ENCODE measurements at regions of chr3 and their contacts with region 1.

Region 1: DNA sequence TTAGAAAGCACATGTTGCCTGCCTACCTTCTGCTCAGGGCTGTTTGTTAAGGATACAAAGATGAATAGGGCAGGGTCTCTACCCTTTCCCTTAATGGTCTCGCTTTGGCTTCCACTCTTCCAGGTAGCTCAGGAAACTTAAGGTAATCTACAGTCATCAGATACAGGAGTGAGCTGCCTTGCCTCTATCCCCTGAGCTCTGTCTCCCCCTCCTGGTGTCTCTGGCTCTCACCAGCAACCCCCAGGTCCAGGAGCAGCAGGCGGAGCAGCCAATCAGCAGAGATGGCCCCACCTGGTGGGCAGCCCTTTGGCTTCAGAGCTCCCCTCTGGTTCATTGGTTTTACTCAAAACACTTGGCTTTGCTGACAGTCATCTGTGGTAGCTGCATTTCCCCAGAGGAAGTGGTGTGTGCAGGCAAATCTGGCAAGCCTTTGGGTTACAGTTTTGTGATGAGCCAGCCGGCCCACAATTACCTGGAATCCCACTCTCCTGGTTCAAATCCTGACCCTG is 8.5 kb upstream of the CX3CR1 start:
- DNase-seq: peak; percentile 64 to 92 (median 78)
- ATAC-seq: peak; percentile 96
- H3K4me3 ChIP-seq: no peak overlapping the region
- H3K4me3 Mint-ChIP-seq: no peak overlapping the region
- H3K27ac ChIP-seq: peak overlapping the region in 1 of 2 experiments; percentile 41
- H3K27ac Mint-ChIP-seq: peak overlapping the region; percentile 20
- H3K4me1 ChIP-seq: peaks cover 6% of the 10 kb centered on the region
- H3K4me1 Mint-ChIP-seq: peaks cover 15% of the 10 kb centered on the region
- H3K27me3 ChIP-seq: no peaks in the 10 kb centered on the region
- H3K27me3 Mint-ChIP-seq: no peaks in the 10 kb centered on the region
- CTCF ChIP-seq: peak; percentile 82

Region 2: GRCh38 chr3:38496131-38496910 is 792.0 kb before region 1 on chr3 and contains the start of gene EXOG:
- CTCF ChIA-PET with region 1: no interaction called
- POLR2A ChIA-PET with region 1: no interaction called
- intact Hi-C with region 1: loop called in 1 of 2 experiments (anchors 5 kb)
- DNase-seq: peak; percentile 93 to 97 (median 95)
- ATAC-seq: peak; percentile 95
- H3K4me3 ChIP-seq: peak within 1 kb of the TSS; percentile 88 to 96
- H3K4me3 Mint-ChIP-seq: peak within 1 kb of the TSS; percentile 97
- H3K27ac ChIP-seq: peak within 1 kb of the TSS; percentile 66 to 71
- H3K27ac Mint-ChIP-seq: peak within 1 kb of the TSS; percentile 91
- H3K4me1 ChIP-seq: peaks cover 14% of the 10 kb centered on the region
- H3K4me1 Mint-ChIP-seq: peaks cover 32% of the 10 kb centered on the region
- H3K27me3 ChIP-seq: no peaks in the 10 kb centered on the region
- H3K27me3 Mint-ChIP-seq: no peaks in the 10 kb centered on the region
- CTCF ChIP-seq: peak; percentile 92
- total RNA-seq, gene EXOG: 16.5 to 20.1 TPM

Region 3: DNA sequence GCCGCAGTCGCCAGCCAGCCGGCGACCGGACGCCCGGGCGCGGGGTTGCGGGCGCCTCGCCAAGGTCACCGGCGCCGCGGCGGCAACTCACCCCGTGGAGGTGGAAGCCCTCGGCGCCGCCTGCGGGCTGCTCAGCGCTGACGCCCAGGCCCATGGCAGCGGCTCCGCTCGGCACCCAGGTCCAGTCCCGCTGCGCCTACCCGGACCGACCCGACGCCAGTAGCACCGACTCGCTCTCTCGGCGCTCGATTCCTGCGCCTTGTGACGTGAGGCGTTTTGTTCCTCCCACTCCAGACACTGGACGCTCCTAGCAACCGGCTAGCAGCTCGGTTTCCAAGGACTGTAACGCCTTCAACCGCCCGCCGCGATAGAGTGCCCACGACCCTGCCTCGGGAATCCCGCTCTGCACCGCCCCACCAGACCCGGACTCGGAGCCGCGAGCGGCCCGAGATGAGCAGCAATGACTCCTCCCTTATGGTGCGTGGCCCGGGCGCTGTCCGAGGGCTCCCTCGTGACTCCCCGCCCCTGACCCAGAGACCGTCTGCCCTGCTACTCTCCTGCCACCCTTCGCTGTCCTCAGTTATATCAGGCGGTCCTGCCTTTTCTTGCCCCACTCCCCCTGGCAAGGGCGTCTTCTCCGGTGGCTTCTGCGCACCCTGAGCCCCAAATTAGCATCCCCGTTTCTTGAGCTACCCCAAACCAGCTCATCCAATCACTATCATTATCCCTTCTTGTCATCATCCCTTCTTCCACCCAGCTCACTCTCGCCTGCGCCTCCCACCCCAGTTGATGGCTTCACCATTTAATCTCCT is 180.8 kb before region 1 on chr3 and contains the starts of genes GORASP1 and TTC21A:
- CTCF ChIA-PET with region 1: interaction called, 198 read pairs
- POLR2A ChIA-PET with region 1: no interaction called
- intact Hi-C with region 1: no loop called
- DNase-seq: peak; percentile 16 to 83 (median 62)
- ATAC-seq: peak; percentile 61
- H3K4me3 ChIP-seq: peak within 1 kb of the TSS; percentile 75 to 95
- H3K4me3 Mint-ChIP-seq: peak within 1 kb of the TSS; percentile 90
- H3K27ac ChIP-seq: peak within 1 kb of the TSS in 1 of 2 experiments; percentile 69
- H3K27ac Mint-ChIP-seq: peak within 1 kb of the TSS; percentile 87
- H3K4me1 ChIP-seq: peaks cover 29% of the 10 kb centered on the region
- H3K4me1 Mint-ChIP-seq: peaks cover 49% of the 10 kb centered on the region
- H3K27me3 ChIP-seq: no peaks in the 10 kb centered on the region
- H3K27me3 Mint-ChIP-seq: no peaks in the 10 kb centered on the region
- CTCF ChIP-seq: no peak
- total RNA-seq, gene GORASP1: 13.9 to 20.2 TPM
- total RNA-seq, gene TTC21A: 1.8 to 2.3 TPM

Region 4: DNA sequence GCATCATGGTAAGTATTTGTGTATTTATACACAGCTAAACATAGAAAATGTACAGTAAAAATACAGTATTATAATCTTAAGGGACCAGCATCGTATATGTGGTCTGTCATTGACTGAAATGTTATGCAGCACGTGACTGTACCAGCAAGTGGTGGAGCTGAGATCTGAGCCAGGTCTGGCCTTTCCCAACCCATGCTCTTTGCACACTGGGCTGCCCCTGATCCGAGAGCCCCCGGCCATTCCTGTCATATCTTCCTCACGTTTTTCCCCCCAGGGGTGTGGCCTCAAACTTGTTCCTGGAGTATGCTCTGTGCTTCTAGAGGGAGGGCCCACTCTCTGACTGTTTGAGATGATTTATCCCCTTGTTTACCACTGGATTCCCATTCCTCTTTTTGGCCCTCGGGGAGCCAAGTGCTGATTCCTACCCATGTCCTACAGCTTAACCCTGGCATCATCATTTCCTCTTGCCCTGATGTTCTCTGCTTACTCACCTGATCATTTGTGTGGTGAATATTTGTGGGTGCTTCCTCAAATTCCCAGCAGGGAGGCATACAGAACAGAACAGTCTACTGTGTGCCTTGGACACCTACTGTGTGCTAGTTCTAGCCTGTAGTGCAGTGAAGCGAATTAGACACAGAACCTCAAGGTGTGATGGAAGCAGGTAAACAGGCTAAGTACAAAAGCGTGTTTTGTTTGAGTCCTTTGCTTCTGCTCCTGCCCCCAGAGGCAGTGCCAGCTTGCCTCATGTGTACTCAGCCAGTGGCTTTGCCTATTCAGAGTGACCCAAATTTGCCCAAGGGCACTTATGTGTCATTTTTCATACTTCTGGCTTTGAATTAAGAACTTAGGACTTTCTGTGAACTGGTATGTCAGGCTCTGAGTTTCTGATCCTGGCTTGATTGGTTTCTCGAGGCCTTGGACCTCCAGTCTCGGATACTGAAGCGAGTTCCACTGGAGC is 155.9 kb before region 1 on chr3:
- CTCF ChIA-PET with region 1: interaction called, 189 read pairs
- POLR2A ChIA-PET with region 1: no interaction called
- intact Hi-C with region 1: no loop called
- DNase-seq: no peak
- ATAC-seq: no peak
- H3K4me3 ChIP-seq: no peak overlapping the region
- H3K4me3 Mint-ChIP-seq: no peak overlapping the region
- H3K27ac ChIP-seq: no peak overlapping the region
- H3K27ac Mint-ChIP-seq: no peak overlapping the region
- H3K4me1 ChIP-seq: peaks cover 12% of the 10 kb centered on the region
- H3K4me1 Mint-ChIP-seq: peaks cover 18% of the 10 kb centered on the region
- H3K27me3 ChIP-seq: no peaks in the 10 kb centered on the region
- H3K27me3 Mint-ChIP-seq: no peaks in the 10 kb centered on the region
- CTCF ChIP-seq: no peak

Region 5: DNA sequence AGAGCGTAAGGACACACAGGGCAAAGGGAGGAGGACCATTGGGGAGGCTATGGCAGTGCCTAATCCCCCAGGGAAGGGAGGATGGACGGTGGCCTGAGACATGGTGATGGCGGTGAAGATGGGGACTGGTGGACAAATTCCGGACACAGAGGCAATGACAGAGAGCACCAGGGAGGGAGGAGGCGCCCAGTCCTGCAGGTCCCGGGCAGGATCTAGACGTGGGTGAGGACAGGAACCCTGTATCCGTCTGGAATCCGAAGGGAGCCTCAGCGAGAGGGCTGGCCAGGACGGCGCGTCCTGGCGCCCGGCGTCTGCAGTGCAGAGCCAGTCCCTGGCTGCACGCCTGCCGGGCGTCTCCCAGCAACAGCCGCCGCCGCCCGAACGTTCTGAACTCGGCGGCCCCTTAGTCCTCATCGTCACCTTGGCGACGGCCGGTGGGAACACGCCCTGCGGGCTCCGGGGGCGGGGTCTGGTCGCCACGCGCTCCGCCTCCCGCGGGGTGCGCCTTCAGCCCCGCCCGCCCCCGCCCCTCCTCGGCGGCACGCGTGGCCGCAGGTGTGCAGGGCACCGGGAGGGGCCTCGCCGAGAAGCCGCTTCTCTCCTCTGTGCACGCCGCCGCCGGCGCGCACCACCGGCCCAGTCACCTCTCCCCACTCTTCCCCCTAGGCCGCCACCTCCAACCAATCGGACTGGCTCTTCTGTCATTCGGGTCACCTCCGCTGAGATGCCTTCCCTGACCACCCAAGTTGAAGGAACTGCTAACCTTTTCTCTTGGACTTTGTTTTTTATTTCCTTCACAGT is 107.6 kb before region 1 on chr3:
- CTCF ChIA-PET with region 1: interaction called, 396 read pairs
- POLR2A ChIA-PET with region 1: no interaction called
- intact Hi-C with region 1: no loop called
- DNase-seq: peak; percentile 79 to 96 (median 88)
- ATAC-seq: peak; percentile 89
- H3K4me3 ChIP-seq: peak overlapping the region; percentile 39 to 44
- H3K4me3 Mint-ChIP-seq: peak overlapping the region; percentile 76
- H3K27ac ChIP-seq: peak overlapping the region; percentile 39 to 62
- H3K27ac Mint-ChIP-seq: peak overlapping the region; percentile 85
- H3K4me1 ChIP-seq: peaks cover 27% of the 10 kb centered on the region
- H3K4me1 Mint-ChIP-seq: peaks cover 37% of the 10 kb centered on the region
- H3K27me3 ChIP-seq: no peaks in the 10 kb centered on the region
- H3K27me3 Mint-ChIP-seq: no peaks in the 10 kb centered on the region
- CTCF ChIP-seq: no peak

Region 6: DNA sequence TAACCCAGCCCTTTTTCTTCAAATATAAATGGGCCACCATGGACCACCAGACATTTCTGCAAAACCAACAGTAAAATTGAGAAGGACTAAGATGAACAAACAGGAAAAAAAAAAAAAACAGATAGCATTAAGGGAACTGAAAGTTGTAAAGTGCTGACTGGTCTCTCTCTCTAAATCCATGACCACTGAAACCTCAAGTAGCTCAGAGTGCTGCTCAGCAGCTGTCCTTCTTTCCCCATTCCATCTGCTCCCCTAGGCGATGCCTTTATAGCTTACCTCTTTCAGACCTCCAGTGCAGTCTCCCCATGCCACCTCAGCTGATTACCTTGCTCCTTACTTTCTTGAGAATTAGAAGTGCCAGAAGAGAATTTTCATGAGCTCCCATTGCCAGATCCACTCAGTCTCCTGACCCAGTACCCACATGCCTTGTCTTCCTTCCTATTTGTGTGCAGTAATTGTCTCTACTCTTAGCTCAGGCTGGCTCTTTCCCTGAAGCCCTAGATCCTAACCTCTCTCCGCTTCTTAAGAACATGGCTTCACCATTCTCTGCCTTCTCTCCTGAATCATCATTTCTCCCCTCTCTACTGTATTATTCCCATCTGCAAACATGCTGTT is 72.1 kb before region 1 on chr3:
- CTCF ChIA-PET with region 1: interaction called, 23 read pairs
- POLR2A ChIA-PET with region 1: no interaction called
- intact Hi-C with region 1: no loop called
- DNase-seq: peak in 1 of 9 experiments; percentile 42
- ATAC-seq: no peak
- H3K4me3 ChIP-seq: no peak overlapping the region
- H3K4me3 Mint-ChIP-seq: no peak overlapping the region
- H3K27ac ChIP-seq: peak overlapping the region in 1 of 2 experiments; percentile 36
- H3K27ac Mint-ChIP-seq: no peak overlapping the region
- H3K4me1 ChIP-seq: no peaks in the 10 kb centered on the region
- H3K4me1 Mint-ChIP-seq: peaks cover 5% of the 10 kb centered on the region
- H3K27me3 ChIP-seq: no peaks in the 10 kb centered on the region
- H3K27me3 Mint-ChIP-seq: no peaks in the 10 kb centered on the region
- CTCF ChIP-seq: no peak

Region 7: GRCh38 chr3:39273119-39273518 is 15.2 kb before region 1 on chr3:
- CTCF ChIA-PET with region 1: interaction called, 74 read pairs
- POLR2A ChIA-PET with region 1: interaction called, 3 read pairs
- intact Hi-C with region 1: no loop called
- DNase-seq: no peak
- ATAC-seq: no peak
- H3K4me3 ChIP-seq: peak overlapping the region in 1 of 2 experiments; percentile 18
- H3K4me3 Mint-ChIP-seq: no peak overlapping the region
- H3K27ac ChIP-seq: peak overlapping the region in 1 of 2 experiments; percentile 73
- H3K27ac Mint-ChIP-seq: no peak overlapping the region
- H3K4me1 ChIP-seq: peaks cover 7% of the 10 kb centered on the region
- H3K4me1 Mint-ChIP-seq: peaks cover 16% of the 10 kb centered on the region
- H3K27me3 ChIP-seq: no peaks in the 10 kb centered on the region
- H3K27me3 Mint-ChIP-seq: no peaks in the 10 kb centered on the region
- CTCF ChIP-seq: no peak